Activated T-helper 1 cell treated with anti-CD3 and anti-CD28 coated beads, Interleukin-12 subunit alpha, Interleukin-12 subunit beta, Interleukin-2, Interleukin-4 antibody, amounts not matched to agents 30 ng/mL and 10 ng/mL and 1 ng/mL, durations not matched to agents 14 hours and 24 hours and 36 hours (primary cell): ENCODE measurements at regions of chr1 and their contacts with region 1.

Region 1: DNA sequence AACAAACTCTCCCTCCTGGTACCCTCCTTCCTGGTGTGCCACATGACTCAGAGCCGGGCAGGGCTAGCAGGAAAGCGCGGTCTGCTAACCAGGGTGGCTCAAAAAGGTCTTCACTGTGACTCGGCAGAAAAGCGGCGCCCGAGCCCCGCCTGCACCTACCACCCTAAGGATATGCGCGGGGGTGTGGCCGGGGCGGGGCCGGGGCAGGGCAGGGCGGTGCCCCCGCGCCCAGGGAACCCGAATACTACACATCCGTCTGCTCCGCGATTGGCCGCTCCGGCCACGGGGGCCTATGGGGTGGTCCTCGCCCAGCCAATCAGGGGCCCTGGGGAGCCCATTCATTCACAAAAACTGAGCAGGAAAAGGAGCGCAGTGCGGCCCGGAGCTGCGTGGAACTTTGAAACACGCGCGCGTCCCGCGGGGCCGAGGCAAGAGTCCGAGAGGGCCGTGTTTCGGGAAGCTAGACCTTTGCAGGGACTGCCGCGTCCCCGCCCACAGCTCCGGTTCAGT is 1.7 kb downstream of the LRP8 start:
- DNase-seq: peak; percentile 94
- H3K4me3 Mint-ChIP-seq: peak overlapping the region; percentile 96
- H3K27ac Mint-ChIP-seq: peak overlapping the region; percentile 96
- H3K4me1 Mint-ChIP-seq: peaks cover 44% of the 10 kb centered on the region
- H3K27me3 Mint-ChIP-seq: no peaks in the 10 kb centered on the region

Region 2: GRCh38 chr1:51616901-51617708 is 1709.0 kb before region 1 on chr1 and contains the start of gene OSBPL9:
- intact Hi-C with region 1: loop called (anchors 10 kb)
- DNase-seq: peak; percentile 79
- H3K4me3 Mint-ChIP-seq: peak within 1 kb of the TSS; percentile 100
- H3K27ac Mint-ChIP-seq: peak within 1 kb of the TSS; percentile 98
- H3K4me1 Mint-ChIP-seq: peaks cover 22% of the 10 kb centered on the region
- H3K27me3 Mint-ChIP-seq: peaks cover 5% of the 10 kb centered on the region
- total RNA-seq, gene OSBPL9: 48.1 and 48.8 TPM in 2 replicates

Region 3: DNA sequence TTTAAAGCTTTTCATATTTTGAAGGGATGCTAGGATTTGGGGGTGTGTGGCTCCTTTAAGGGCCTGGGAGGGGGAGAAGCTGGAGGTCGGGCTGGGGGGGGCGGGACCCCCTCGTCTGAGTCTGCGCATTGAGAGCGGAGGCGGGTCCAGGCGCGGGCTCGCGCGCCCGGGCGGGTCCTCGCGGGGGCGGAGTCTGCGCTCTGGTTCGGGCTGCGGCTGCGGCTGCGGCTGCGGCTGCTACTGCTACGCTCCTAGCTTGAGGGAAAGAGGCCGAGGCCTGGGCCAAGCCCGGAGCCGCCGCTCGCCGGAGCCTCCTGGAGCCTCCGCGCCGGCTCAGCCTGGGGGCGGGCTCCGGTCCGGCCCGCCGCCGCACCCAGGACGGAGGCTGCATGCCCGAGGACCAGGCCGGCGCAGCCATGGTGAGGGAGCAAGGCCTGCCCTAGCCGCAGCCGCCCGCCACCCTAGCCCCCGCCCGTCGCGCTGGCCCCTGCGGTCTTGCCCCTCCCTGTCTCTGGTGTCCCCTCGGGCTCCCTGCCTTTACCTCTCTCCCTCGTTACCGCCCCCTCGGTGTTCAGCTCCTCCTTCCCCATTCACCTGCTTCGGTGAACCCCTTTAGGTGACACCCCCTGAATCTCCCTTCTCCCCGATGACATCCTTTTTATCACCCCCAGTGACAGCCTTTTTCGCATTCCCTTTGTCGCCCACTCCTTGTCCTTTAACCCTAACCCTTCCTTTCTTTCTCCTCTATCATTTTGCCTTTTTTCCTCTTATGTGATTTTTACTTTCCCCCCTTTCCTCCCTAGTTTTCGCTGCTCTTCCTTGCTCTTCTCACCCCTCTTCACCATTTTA is 599.7 kb before region 1 on chr1 and contains the start of gene ZYG11B:
- intact Hi-C with region 1: loop called (anchors 5 kb)
- DNase-seq: peak; percentile 88
- H3K4me3 Mint-ChIP-seq: peak within 1 kb of the TSS; percentile 88
- H3K27ac Mint-ChIP-seq: peak within 1 kb of the TSS; percentile 82
- H3K4me1 Mint-ChIP-seq: peaks cover 42% of the 10 kb centered on the region
- H3K27me3 Mint-ChIP-seq: no peaks in the 10 kb centered on the region
- total RNA-seq, gene ZYG11B: 8.4 and 8.5 TPM in 2 replicates

Region 4: GRCh38 chr1:53220171-53220961 is 105.8 kb before region 1 on chr1 and contains the start of gene CZIB:
- intact Hi-C with region 1: loop called (anchors 1 kb)
- DNase-seq: peak; percentile 92
- H3K4me3 Mint-ChIP-seq: peak within 1 kb of the TSS; percentile 90
- H3K27ac Mint-ChIP-seq: peak within 1 kb of the TSS; percentile 97
- H3K4me1 Mint-ChIP-seq: peaks cover 30% of the 10 kb centered on the region
- H3K27me3 Mint-ChIP-seq: peaks cover 2% of the 10 kb centered on the region
- total RNA-seq, gene CZIB: 43.6 and 45.2 TPM in 2 replicates

Region 5: GRCh38 chr1:53367503-53368304 is 41.6 kb after region 1 on chr1:
- intact Hi-C with region 1: loop called (anchors 1 kb)
- DNase-seq: peak; percentile 27
- H3K4me3 Mint-ChIP-seq: peak overlapping the region; percentile 78
- H3K27ac Mint-ChIP-seq: peak overlapping the region; percentile 72
- H3K4me1 Mint-ChIP-seq: peaks cover 15% of the 10 kb centered on the region
- H3K27me3 Mint-ChIP-seq: peaks cover 1% of the 10 kb centered on the region

Region 6: DNA sequence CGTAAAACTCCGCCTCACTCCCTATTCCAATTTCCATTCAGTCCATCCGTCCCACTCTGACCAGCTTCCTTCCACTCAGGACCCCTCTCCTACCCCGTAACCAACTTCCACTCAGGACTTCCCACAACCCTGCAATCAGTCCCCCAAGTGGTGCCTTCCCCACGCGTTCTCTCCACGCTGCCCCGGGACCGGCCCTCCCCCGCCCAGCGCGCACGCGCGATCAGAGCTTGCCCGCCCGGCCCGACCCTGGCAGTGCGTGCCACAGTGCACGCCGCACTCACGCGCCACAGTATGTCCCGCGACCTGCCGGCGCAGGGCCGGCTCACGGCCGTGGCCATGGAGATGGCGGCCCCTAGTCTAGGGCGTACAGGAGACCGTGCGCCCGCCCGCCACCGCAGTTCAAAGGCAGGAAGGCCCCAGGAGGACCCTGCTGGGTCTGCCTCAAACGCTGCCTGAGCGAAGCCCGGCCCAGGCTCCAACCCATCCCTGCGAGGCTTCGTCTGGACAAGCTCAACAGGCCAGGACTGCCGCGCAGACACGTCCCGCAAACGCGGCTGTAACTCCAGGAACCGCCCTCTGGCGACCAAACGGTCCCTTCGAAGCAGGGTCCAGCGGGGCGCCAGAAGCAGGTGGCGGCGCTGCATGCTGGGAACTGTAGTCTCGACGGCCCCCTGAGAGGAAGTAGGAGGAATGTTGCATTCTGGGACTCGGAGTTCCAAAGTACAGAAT is 511.9 kb after region 1 on chr1 and contains the start of gene NDC1:
- intact Hi-C with region 1: loop called (anchors 2 kb)
- DNase-seq: peak; percentile 86
- H3K4me3 Mint-ChIP-seq: peak within 1 kb of the TSS; percentile 100
- H3K27ac Mint-ChIP-seq: peak within 1 kb of the TSS; percentile 98
- H3K4me1 Mint-ChIP-seq: peaks cover 26% of the 10 kb centered on the region
- H3K27me3 Mint-ChIP-seq: peaks cover 4% of the 10 kb centered on the region
- total RNA-seq, gene NDC1: 33.2 and 38.2 TPM in 2 replicates

Region 7: DNA sequence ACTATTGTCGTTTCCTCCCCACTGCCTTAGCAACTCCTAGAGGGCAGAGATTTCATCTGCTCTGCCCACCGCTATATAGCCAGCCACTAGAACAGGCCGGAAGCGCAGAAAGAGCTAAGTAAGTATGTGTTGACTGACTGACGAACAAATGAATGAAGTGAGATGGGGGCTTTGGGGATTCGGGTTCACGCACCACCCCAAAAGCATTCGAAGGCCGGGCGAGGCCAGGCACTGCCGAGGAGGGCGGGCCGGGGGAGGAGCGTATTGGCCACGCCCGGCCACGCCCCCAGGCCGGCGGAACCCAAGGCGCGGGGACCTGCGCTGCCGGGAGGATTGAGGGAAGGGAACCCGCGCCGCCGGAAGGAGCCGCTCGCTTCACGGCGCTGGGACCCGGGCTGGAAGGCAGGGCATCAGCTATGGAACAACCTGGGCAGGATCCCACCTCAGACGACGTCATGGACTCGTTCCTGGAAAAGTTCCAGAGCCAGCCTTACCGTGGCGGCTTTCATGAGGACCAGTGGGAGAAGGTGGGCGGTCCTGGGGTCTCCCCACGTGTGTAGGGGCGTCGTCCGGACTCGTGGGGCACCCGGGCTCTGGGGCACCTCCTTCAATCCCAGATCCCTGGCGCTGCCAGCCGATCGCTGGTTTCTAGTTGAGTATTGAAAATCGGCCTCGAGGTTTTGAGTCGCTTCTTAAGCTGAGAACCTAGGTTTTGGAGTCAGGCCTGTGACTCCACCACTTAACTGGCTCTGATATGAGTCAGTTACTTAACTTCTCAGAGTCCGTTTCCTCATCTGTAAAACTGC is 1389.6 kb after region 1 on chr1 and contains the start of gene TTC4:
- intact Hi-C with region 1: loop called (anchors 5 kb)
- DNase-seq: peak; percentile 84
- H3K4me3 Mint-ChIP-seq: peak within 1 kb of the TSS; percentile 94
- H3K27ac Mint-ChIP-seq: peak within 1 kb of the TSS; percentile 77
- H3K4me1 Mint-ChIP-seq: peaks cover 31% of the 10 kb centered on the region
- H3K27me3 Mint-ChIP-seq: peaks cover 6% of the 10 kb centered on the region
- total RNA-seq, gene TTC4: 43.7 TPM in 2 replicates